Activated T-helper 1 cell treated with anti-CD3 and anti-CD28 coated beads, Interleukin-12 subunit alpha, Interleukin-12 subunit beta, Interleukin-2, Interleukin-4 antibody, amounts not matched to agents 30 ng/mL and 10 ng/mL and 1 ng/mL, durations not matched to agents 14 hours and 24 hours and 36 hours (primary cell): ENCODE measurements at regions of chr7 and their contacts with region 1.

Region 1: DNA sequence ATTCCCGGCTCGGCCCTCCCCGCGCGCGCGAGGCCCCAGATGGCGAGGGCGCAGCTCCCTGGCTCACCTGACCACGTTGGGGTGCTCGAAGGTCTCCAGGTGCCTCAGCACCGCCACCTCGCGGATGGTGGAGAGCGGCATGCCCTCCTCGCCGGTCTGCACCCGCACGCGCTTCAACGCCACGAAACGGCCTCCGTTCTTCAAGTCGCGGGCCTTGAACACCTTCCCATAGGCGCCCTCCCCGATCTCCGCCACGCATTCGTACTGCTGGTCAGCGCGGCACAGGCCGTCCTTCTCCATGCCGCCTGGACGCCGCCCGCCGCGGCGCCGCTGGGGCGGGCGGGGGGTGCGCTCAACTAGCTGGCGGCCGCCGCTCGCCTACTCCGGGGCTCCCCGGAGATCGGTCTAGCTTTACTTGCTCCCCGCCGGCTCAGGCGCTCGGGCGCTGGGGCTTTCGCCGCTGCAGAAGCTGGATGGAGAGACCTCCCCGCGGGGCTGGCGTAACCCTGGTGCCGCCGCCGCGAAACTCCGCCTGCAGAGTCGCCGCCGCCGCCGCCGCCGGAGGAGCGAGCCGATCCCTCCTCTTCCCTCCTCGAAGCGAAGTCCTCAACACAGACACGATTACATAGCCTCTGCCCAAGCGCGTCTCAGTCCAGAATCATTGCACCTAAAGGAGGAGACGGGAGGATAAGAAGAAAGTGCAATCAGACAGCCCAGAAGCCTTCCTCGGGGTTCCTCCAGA is 3.2 kb downstream of the CDK6 start:
- DNase-seq: peak; percentile 87
- H3K4me3 Mint-ChIP-seq: peak overlapping the region; percentile 97
- H3K27ac Mint-ChIP-seq: peak overlapping the region; percentile 97
- H3K4me1 Mint-ChIP-seq: peaks cover 54% of the 10 kb centered on the region
- H3K27me3 Mint-ChIP-seq: peaks cover 5% of the 10 kb centered on the region

Region 2: DNA sequence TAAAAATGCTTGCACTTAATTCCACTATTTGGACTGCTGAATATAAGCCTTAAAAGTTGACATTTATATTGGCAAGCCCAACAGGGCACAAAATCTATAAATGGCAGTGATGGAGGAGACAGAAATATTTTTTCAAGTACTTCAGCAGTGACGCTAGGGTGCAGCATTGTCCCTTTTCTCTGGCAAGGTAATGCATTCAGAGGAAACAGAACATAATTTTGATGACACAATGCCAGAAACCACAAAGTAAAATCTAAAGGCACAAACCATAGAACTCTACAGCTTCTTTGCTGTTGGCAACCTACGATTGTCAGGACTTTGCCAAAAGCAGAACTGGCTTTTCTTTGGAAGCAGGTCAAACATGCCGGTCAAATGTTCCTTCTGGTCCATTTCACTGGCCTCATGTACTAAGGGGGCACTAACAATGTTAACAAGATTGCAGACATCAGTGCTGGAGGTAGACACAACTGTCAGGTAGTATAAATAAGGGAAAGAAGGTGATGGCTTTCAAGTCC is 212.1 kb before region 1 on chr7:
- intact Hi-C with region 1: loop called (anchors 1 kb)
- DNase-seq: peak; percentile 74
- H3K4me3 Mint-ChIP-seq: peak overlapping the region; percentile 75
- H3K27ac Mint-ChIP-seq: peak overlapping the region; percentile 89
- H3K4me1 Mint-ChIP-seq: peaks cover 58% of the 10 kb centered on the region
- H3K27me3 Mint-ChIP-seq: no peaks in the 10 kb centered on the region

Region 3: DNA sequence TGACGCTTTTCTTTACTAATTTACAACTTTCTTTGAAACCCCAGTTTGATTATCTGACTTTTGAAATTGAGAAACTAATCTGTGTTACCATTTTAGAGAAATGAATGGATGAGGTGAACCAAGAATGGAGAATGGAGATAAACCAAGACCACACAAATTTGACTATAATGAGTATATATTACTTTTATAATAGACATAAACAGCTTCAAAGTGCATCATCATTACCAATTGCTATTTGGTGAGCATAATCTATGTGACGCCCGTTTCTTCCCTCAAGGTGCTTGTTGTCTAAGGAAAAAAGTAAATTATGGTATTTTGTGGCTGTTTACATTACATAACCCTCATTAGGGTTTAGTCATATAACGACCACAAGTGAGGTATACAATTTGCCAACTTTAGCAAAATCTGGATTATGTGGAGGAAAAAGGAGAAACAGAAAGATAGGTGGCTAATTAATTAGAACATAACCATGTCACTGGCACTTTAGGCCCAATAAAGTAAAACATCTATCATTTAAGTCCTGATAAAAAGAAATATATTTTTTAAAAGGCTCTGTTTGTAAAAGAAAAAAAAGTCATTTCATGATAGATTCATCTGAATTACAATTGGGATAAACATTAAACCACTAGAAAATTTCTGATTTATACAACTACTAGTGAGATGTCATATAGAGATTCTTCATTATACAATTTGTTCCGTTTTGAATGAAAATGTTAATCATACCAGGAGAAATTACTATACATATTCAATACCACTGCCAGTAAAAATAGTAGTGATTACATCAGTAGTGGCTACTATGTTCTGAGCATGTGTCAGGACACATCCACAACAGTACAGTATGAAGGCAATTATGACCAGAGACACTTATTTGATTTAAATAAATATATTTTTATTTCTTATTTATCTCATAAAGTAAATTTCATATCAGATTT is 124.8 kb before region 1 on chr7:
- intact Hi-C with region 1: loop called (anchors 1 kb)
- DNase-seq: no peak
- H3K4me3 Mint-ChIP-seq: no peak overlapping the region
- H3K27ac Mint-ChIP-seq: peak overlapping the region; percentile 84
- H3K4me1 Mint-ChIP-seq: peaks cover 59% of the 10 kb centered on the region
- H3K27me3 Mint-ChIP-seq: no peaks in the 10 kb centered on the region

Region 4: DNA sequence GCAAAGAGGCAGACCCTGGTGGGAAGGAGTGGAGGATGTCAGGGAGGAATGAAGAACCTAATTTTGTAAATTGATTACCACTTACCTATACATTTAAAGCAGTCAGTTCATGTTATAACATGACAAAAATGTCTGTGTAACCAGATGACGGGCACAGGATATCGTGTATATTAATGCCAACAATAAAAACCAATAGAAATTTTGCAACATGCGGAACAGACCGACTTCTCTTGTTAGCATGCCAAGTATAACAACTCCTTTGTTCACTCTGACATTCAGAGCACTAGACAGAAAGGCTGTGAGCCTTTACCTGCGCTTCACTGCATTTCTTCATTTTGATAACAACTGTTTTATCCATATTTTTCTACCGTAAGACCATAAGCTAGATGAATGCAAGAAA is 26.7 kb before region 1 on chr7:
- intact Hi-C with region 1: no loop called
- DNase-seq: no peak
- H3K4me3 Mint-ChIP-seq: no peak overlapping the region
- H3K27ac Mint-ChIP-seq: no peak overlapping the region
- H3K4me1 Mint-ChIP-seq: peaks cover 87% of the 10 kb centered on the region
- H3K27me3 Mint-ChIP-seq: no peaks in the 10 kb centered on the region

Region 5: DNA sequence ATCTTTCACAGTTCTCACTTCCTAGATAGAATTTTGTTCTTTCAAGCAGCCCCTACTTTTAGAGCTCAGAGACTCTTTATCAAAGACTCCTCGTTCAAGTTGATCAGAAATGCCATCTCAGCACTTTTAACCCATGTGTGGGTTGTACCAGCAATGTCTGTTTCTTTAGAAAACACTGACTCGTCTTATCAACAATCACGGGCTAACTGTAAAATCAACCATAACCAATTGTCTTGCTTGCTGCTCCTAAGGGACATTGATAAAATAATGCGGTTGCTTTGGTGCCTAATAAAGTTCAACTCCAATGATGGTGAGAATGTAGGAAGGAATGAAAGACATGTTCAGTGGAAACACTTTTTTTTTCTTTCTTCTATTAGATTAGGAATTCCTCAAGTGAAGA is 16.1 kb after region 1 on chr7:
- intact Hi-C with region 1: loop called (anchors 1 kb)
- DNase-seq: no peak
- H3K4me3 Mint-ChIP-seq: peak overlapping the region; percentile 13
- H3K27ac Mint-ChIP-seq: peak overlapping the region; percentile 37
- H3K4me1 Mint-ChIP-seq: peaks cover 10% of the 10 kb centered on the region
- H3K27me3 Mint-ChIP-seq: peaks cover 2% of the 10 kb centered on the region

Region 6: DNA sequence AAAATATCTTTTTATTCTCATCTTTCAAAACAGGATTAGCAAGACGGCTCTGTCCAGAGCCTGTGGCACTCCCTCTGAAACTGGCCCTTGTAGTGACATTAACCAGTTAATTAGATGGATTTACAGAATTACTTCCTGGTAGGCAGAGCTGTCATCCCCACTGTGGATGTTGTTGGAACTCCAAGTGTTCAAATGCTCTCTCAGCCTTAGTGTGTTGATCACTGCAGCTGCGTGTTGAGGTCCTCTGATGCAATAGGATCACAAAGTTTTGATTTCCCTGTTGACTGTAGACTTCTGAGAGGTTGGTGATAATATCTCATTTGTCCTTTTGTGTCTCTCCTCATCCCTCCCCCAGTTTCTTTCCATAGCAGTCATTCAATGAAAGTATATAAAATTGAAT is 120.5 kb after region 1 on chr7:
- intact Hi-C with region 1: loop called (anchors 1 kb)
- DNase-seq: no peak
- H3K4me3 Mint-ChIP-seq: no peak overlapping the region
- H3K27ac Mint-ChIP-seq: peak overlapping the region; percentile 40
- H3K4me1 Mint-ChIP-seq: peaks cover 34% of the 10 kb centered on the region
- H3K27me3 Mint-ChIP-seq: peaks cover 1% of the 10 kb centered on the region

Region 7: GRCh38 chr7:93231799-93232672 is 398.8 kb after region 1 on chr7 and contains the start of gene VPS50:
- intact Hi-C with region 1: loop called (anchors 1 kb)
- DNase-seq: peak; percentile 91
- H3K4me3 Mint-ChIP-seq: peak within 1 kb of the TSS; percentile 98
- H3K27ac Mint-ChIP-seq: peak within 1 kb of the TSS; percentile 93
- H3K4me1 Mint-ChIP-seq: peaks cover 18% of the 10 kb centered on the region
- H3K27me3 Mint-ChIP-seq: peaks cover 7% of the 10 kb centered on the region
- total RNA-seq, gene VPS50: 16.7 and 17.0 TPM in 2 replicates

Region 8: GRCh38 chr7:93265220-93265619 is 432.0 kb after region 1 on chr7:
- intact Hi-C with region 1: no loop called
- DNase-seq: no peak
- H3K4me3 Mint-ChIP-seq: no peak overlapping the region
- H3K27ac Mint-ChIP-seq: no peak overlapping the region
- H3K4me1 Mint-ChIP-seq: no peaks in the 10 kb centered on the region
- H3K27me3 Mint-ChIP-seq: no peaks in the 10 kb centered on the region